HEK293 (cell line): ENCODE measurements at regions of chr2 and their contacts with region 1.

Region 1: GRCh38 chr2:218898109-218898878 is 17.6 kb downstream of the WNT10A start:
- H3K4me3 ChIP-seq: peak overlapping the region; percentile 10
- H3K27ac ChIP-seq: no peak overlapping the region
- H3K4me1 ChIP-seq: no peaks in the 10 kb centered on the region; the same call in 1 of the 2 replicates
- CTCF ChIP-seq: peak; percentile 98

Region 2: GRCh38 chr2:218860950-218861381 is 37.3 kb before region 1 on chr2:
- CTCF ChIA-PET with region 1: interaction called, 115 read pairs
- POLR2A ChIA-PET with region 1: interaction called, 5 read pairs
- H3K4me3 ChIP-seq: no peak overlapping the region
- H3K27ac ChIP-seq: no peak overlapping the region
- H3K4me1 ChIP-seq: peaks cover 16% of the 10 kb centered on the region
- CTCF ChIP-seq: no peak

Region 3: GRCh38 chr2:218867900-218868299 is 30.4 kb before region 1 on chr2:
- CTCF ChIA-PET with region 1: interaction called, 552 read pairs
- POLR2A ChIA-PET with region 1: no interaction called
- H3K4me3 ChIP-seq: no peak overlapping the region
- H3K27ac ChIP-seq: no peak overlapping the region
- H3K4me1 ChIP-seq: no peaks in the 10 kb centered on the region
- CTCF ChIP-seq: no peak

Region 4: DNA sequence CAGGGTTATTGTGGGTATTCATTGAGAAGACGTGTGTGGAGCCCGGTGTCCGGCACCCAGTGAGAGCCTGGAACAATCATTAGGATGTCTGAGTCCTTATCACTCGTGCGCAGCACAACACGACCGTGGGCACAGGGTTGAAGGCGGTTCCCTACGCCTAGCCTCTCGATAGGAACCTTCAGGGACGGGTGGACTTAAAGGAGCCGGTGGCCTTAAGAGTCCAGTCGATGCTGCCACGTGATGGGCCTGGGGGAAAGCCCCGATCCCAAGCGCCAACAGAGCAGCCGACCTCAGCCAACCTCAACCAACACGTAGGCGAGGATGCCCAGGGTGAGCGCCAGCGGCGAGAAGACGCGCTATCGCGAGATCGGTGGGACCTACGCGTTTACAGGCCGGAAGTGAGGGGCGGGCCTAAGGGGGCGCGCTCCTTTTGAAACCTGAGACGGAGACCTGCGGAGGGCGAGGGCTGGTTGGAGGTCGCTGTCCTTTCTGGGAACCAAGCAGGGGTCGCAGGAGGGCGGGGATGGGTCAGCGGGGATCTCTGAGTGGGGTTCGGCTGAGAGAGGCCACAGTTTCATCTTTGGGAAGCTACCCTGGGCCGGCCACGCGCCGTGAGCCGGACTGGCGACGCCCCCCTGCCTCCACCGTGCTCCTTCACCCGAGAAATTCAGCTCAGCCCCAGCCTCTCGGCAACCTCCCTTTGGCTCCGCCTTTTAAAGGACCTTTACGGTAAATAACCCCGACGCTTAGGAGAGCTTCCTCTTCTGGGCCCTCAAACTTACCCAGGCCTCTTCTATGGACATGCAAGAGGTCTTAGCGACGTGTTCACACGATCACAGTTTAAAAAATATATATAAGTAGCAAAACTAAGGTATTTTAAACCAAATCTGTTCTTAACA is 10.7 kb after region 1 on chr2:
- CTCF ChIA-PET with region 1: interaction called, 28 read pairs
- POLR2A ChIA-PET with region 1: interaction called, 12 read pairs
- H3K4me3 ChIP-seq: peak overlapping the region; percentile 72
- H3K27ac ChIP-seq: peak overlapping the region; percentile 56
- H3K4me1 ChIP-seq: no peaks in the 10 kb centered on the region
- CTCF ChIP-seq: no peak; the same call in 1 of the 2 replicates

Region 5: DNA sequence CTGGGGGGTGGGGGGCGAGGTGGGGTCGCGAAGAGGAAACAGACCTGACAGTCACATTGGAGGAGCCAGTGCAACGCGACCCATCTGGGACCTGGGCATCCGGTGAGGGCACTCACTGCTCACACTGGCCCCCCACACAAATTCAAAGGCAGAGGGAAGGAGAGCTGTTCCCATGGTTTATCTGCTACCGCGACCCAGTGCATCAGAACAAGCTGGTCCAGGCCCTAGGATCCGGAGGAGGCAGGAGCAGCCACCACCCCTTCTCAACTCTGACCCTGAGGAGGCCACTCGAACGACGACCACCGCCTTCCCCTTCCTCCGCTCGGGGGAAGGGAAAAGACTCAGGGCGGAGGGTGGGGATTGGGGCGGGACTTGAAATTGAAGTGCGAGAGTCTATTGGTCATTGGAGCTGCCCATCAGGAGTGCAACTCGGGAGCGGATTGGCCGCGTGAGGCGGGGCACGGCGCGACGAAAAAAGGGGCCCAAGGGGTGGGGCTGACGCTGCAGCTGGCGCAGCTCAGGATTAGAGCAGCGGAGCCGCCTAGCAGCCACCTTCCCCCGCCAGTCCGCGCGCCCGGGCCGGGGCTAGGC is 60.9 kb after region 1 on chr2 and contains the start of gene CDK5R2:
- CTCF ChIA-PET with region 1: interaction called, 12 read pairs
- POLR2A ChIA-PET with region 1: interaction called, 7 read pairs
- H3K4me3 ChIP-seq: peak within 1 kb of the TSS; percentile 51
- H3K27ac ChIP-seq: no peak within 1 kb of the TSS; the same call in 1 of the 2 replicates
- H3K4me1 ChIP-seq: peaks cover 9% of the 10 kb centered on the region
- CTCF ChIP-seq: no peak

Region 6: GRCh38 chr2:218979846-218980734 is 81.8 kb after region 1 on chr2:
- CTCF ChIA-PET with region 1: interaction called, 16 read pairs
- POLR2A ChIA-PET with region 1: no interaction called
- H3K4me3 ChIP-seq: peak overlapping the region; percentile 42
- H3K27ac ChIP-seq: no peak overlapping the region; the same call in 1 of the 2 replicates
- H3K4me1 ChIP-seq: 0 out of 2 replicates have a peak, but pooled peaks cover 2% of the 10 kb centered on the region
- CTCF ChIP-seq: peak; percentile 99